ENCODE measurements at regions of chr6 and their contacts with region 1.

Region 1: DNA sequence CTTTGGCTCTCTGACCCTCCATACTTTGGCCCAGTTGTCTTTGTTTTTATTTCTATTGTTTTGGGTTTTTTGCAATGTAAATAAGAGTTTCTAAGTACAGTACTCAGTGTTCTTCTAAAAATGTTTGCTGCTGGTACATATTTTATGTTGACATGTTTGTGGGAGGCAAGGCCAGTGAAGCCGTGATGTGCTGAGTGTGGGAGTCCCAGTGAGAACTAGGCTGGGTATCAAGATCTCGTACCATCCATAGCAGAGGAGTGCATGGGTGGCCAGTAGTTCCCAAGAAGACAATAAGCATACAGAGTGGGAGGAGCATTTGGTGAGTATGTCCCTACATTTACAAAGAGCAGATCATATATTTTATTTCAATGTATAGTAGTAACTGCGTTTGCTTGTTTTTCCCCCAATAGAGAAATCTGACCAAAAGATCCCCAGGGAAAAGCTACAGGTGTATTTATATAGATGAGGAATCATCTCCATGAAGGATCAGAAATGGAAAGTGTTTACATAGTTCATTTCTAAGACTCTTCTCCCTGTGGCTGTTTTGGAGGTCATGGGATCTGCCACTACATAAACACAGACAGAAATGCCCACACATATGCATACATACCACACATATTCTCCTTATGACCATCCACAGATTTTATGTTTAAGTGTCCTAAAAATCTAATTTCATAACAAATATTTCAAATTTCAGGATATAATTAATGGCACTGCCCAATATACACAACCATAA is 285.9 kb downstream of the ALDH8A1 start:
- DNase-seq: no peak
- H3K4me3 ChIP-seq: no peak overlapping the region
- CTCF ChIP-seq: no peak

Region 2: DNA sequence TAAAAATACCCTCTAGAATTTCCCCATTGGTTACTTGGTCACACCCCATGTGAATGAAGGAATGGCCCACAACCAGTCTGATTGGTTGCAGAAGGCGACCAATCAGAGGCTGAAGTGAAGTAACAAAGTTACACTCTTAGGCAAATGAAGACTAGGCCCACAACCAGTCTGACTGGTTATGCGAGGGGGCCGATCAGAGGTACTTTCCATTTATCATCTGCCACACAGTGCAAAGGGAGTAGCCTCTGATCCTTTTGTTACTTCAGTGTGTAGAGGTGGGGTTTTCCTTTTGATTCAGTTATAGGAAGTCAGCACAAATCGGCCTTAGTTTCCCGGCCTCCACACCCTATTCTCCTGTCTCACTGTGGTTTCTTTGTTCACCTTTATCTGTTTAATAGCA is 284.9 kb before region 1 on chr6:
- in situ Hi-C with region 1: no loop called
- DNase-seq: no peak
- H3K4me3 ChIP-seq: no peak overlapping the region
- CTCF ChIP-seq: no peak

Region 3: GRCh38 chr6:134609716-134610261 is 54.2 kb before region 1 on chr6:
- in situ Hi-C with region 1: loop called (anchors 10 kb)
- DNase-seq: no peak
- H3K4me3 ChIP-seq: no peak overlapping the region
- CTCF ChIP-seq: no peak

Region 4: GRCh38 chr6:135397172-135397952 is 733.4 kb after region 1 on chr6:
- in situ Hi-C with region 1: no loop called
- DNase-seq: no peak
- H3K4me3 ChIP-seq: no peak overlapping the region
- CTCF ChIP-seq: no peak